Activated naive CD4-positive, alpha-beta T cell treated with anti-CD3 and anti-CD28 coated beads for 36 hours (primary cell): ENCODE measurements at regions of chr2 and their contacts with region 1.

Region 1: DNA sequence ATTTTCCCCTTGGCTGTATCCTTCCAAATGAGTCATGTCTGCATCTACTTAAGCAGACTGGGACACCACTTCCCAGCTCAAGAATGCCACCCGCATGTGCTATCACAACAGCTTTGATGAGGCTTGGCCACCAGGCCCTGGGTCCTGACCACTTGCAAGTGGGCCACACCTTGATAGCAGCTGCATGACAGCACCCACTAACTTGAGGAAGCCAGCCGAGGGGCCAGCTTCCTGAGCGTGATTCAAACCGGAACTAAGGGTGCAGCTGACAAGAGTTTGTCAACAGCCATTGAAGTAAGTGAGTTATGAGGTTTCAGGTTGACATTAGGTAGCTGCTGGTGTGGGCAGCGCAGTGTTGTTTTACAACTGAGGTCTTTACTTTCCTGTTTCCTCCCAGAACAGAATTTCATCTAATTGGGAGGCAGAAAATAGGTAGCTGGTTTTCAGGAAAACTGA is 54.4 kb downstream of the EPHA4 start:
- DNase-seq: peak; percentile 83
- H3K4me3 Mint-ChIP-seq: no peak overlapping the region
- H3K27ac Mint-ChIP-seq: no peak overlapping the region
- H3K4me1 Mint-ChIP-seq: no peaks in the 10 kb centered on the region
- H3K27me3 Mint-ChIP-seq: no peaks in the 10 kb centered on the region

Region 2: GRCh38 chr2:220687231-220687843 is 830.4 kb before region 1 on chr2:
- CTCF ChIA-PET with region 1: no interaction called
- intact Hi-C with region 1: loop called (anchors 2 kb)
- DNase-seq: peak; percentile 72
- H3K4me3 Mint-ChIP-seq: no peak overlapping the region
- H3K27ac Mint-ChIP-seq: no peak overlapping the region
- H3K4me1 Mint-ChIP-seq: no peaks in the 10 kb centered on the region
- H3K27me3 Mint-ChIP-seq: peaks cover 12% of the 10 kb centered on the region

Region 3: DNA sequence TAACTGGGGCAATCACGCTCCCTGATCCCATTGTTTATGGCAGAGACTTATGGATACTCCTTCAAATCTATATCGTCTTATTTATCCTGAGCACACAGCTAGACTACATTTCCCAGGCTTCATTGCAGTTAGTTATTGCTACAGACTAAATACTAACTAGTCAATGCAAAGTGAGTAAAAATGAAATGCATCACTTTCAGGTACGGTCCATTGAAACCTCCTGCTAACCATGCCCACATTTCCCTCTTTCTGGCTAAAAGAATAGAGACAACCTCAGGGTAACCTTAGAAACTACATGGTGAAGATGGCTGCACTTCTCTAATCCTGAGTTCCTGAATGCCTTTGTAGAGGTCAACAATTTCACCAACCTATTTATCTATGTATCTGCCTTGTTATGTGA is 383.0 kb before region 1 on chr2:
- CTCF ChIA-PET with region 1: no interaction called
- intact Hi-C with region 1: loop called (anchors 2 kb)
- DNase-seq: no peak
- H3K4me3 Mint-ChIP-seq: no peak overlapping the region
- H3K27ac Mint-ChIP-seq: no peak overlapping the region
- H3K4me1 Mint-ChIP-seq: no peaks in the 10 kb centered on the region
- H3K27me3 Mint-ChIP-seq: peaks cover under 1% of the 10 kb centered on the region

Region 4: GRCh38 chr2:221189431-221190067 is 328.2 kb before region 1 on chr2:
- CTCF ChIA-PET with region 1: no interaction called
- intact Hi-C with region 1: no loop called
- DNase-seq: no peak
- H3K4me3 Mint-ChIP-seq: no peak overlapping the region
- H3K27ac Mint-ChIP-seq: no peak overlapping the region
- H3K4me1 Mint-ChIP-seq: no peaks in the 10 kb centered on the region
- H3K27me3 Mint-ChIP-seq: peaks cover 9% of the 10 kb centered on the region

Region 5: GRCh38 chr2:221347471-221347870 is 170.3 kb before region 1 on chr2:
- CTCF ChIA-PET with region 1: no interaction called
- intact Hi-C with region 1: no loop called
- DNase-seq: no peak
- H3K4me3 Mint-ChIP-seq: no peak overlapping the region
- H3K27ac Mint-ChIP-seq: no peak overlapping the region
- H3K4me1 Mint-ChIP-seq: no peaks in the 10 kb centered on the region
- H3K27me3 Mint-ChIP-seq: peaks cover 1% of the 10 kb centered on the region

Region 6: GRCh38 chr2:221529943-221530652 is 12.4 kb after region 1 on chr2:
- CTCF ChIA-PET with region 1: no interaction called
- intact Hi-C with region 1: loop called (anchors 1 kb)
- DNase-seq: peak; percentile 20
- H3K4me3 Mint-ChIP-seq: peak overlapping the region; percentile 55
- H3K27ac Mint-ChIP-seq: peak overlapping the region; percentile 78
- H3K4me1 Mint-ChIP-seq: peaks cover 40% of the 10 kb centered on the region
- H3K27me3 Mint-ChIP-seq: no peaks in the 10 kb centered on the region

Region 7: DNA sequence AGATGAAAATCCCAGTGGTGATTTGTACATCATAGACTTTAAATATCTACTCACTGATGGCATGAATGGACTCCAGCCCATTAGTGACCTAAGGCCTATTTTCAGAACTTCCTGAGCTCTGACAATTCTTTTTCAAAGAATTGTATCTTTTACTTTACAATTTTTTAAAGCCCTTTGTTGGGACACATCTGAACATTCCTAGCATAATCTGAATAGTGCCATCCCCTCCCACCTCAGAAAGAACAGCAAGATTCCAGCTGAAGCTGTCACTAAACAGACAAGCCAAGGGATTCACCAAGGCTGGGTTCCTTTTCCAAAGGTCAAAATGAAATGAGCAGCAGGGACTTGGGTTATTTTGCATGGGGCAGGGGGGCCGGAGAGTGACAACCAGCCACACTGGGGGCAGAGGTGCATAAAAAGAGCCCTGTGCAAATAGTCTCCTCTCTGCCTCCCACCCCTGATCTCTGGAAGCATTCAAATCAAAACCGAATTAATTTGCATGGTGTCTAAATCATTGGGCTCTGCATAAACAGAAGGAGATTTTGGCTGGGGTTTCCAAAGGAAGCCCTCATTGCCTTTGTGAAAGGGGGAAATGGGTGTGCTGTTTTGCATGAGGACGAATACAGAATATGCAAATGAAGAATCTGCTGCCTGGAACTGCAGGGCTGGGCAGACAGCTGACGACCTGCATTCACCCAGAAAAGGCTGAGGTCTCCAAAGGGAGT is 37.2 kb after region 1 on chr2:
- CTCF ChIA-PET with region 1: no interaction called
- intact Hi-C with region 1: loop called (anchors 1 kb)
- DNase-seq: peak; percentile 48
- H3K4me3 Mint-ChIP-seq: peak overlapping the region; percentile 12
- H3K27ac Mint-ChIP-seq: peak overlapping the region; percentile 46
- H3K4me1 Mint-ChIP-seq: peaks cover 23% of the 10 kb centered on the region
- H3K27me3 Mint-ChIP-seq: no peaks in the 10 kb centered on the region

Region 8: GRCh38 chr2:221641181-221641871 is 123.6 kb after region 1 on chr2:
- CTCF ChIA-PET with region 1: no interaction called
- intact Hi-C with region 1: loop called (anchors 5 kb)
- DNase-seq: no peak
- H3K4me3 Mint-ChIP-seq: no peak overlapping the region
- H3K27ac Mint-ChIP-seq: no peak overlapping the region
- H3K4me1 Mint-ChIP-seq: peaks cover 2% of the 10 kb centered on the region
- H3K27me3 Mint-ChIP-seq: no peaks in the 10 kb centered on the region

Region 9: DNA sequence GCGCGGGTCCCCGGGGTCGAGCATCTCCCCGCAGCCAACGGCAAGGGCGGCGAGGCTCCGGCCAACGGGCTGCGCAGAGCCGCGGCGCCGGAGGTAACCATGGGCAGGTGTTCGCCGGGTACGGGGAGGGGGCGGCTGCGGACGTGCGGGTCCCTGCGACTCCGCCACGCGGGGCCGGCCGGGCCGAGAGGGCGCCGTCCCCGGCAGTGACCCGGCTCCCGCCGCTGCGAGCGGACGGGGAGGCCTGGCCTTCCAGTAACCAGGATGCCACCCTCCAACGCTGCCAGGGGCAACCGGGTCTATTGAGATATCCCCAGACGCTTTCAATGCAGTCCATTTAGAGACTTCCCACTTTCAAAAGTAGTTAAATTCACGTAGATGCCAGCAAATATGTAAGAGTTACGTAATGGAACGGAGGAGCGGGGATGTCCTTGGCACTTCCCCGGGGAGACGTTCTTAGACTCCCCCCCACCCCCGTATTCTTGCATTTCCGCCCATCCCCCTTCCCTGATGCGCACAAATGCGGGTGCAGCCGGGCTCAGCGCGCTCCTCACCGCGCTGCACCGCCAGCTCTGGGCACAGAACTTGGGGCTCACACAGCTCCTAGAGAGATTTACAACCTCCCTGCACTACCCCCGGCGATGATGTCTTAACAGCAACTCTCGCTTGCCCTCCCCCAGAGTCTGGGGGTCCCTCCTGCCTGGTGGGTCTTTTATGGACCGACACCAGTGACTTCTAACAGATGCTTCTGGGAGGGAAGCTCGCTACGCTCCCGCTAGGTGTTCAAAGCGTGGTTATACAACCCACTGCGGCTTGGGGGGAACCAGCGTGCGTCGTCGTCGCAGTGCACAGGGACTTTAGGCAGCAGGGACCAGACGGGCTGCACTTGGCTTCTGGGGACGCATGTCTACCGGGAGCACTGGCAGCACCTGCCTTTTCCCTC is 907.3 kb after region 1 on chr2:
- CTCF ChIA-PET with region 1: no interaction called
- intact Hi-C with region 1: loop called (anchors 10 kb)
- DNase-seq: peak; percentile 67
- H3K4me3 Mint-ChIP-seq: peak overlapping the region; percentile 83
- H3K27ac Mint-ChIP-seq: peak overlapping the region; percentile 88
- H3K4me1 Mint-ChIP-seq: peaks cover 42% of the 10 kb centered on the region
- H3K27me3 Mint-ChIP-seq: peaks cover 56% of the 10 kb centered on the region